ENCODE measurements at regions of chr11 and their contacts with region 1.

Region 1: DNA sequence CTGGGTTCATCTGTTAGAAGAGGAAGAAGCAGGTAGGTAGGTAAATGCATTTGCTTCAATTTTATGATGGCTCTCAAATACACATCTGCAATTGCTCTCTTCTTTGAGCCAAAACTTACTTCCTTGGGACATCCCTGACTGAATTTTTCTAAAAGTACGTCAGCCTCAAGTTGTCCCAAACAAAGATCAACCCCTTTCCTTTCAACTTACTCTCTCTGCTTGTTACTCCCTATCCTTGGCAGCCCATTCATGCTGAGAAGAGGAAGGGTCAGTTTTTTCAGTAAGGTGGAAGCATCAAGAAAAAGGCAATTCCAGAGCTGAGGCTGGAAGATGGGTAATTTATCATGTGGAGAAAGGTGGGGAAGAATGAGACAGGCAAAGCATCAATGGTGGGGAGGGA is 111.2 kb downstream of the LRRC32 start:
- DNase-seq: no peak

Region 2: GRCh38 chr11:76635991-76636738 is 76.8 kb after region 1 on chr11:
- intact Hi-C with region 1: loop called in 1 of 2 experiments (anchors 2 kb)
- DNase-seq: no peak